Activated CD4-positive, alpha-beta T cell treated with anti-CD3 and anti-CD28 coated beads, Interleukin-2, amount 10 ng/mL, durations not matched to agents 7 days and 5 days (primary cell): ENCODE measurements at regions of chr1 and their contacts with region 1.

Region 1: GRCh38 chr1:37859507-37860345 is at the start of gene MTF1:
- DNase-seq: peak; percentile 98
- H3K4me3 Mint-ChIP-seq: peak within 1 kb of the TSS; percentile 93
- H3K27ac Mint-ChIP-seq: peak within 1 kb of the TSS; percentile 97
- H3K4me1 Mint-ChIP-seq: peaks cover 29% of the 10 kb centered on the region
- H3K27me3 Mint-ChIP-seq: no peaks in the 10 kb centered on the region
- total RNA-seq, gene MTF1: 21.0 to 22.5 TPM

Region 2: GRCh38 chr1:37807555-37808368 is 52.0 kb before region 1 on chr1 and contains the starts of genes C1orf122 and YRDC:
- CTCF ChIA-PET with region 1: interaction called, 16 read pairs
- POLR2A ChIA-PET with region 1: interaction called, 8 read pairs
- DNase-seq: peak; percentile 94
- H3K4me3 Mint-ChIP-seq: peak within 1 kb of the TSS; percentile 95
- H3K27ac Mint-ChIP-seq: peak within 1 kb of the TSS; percentile 96
- H3K4me1 Mint-ChIP-seq: peaks cover 42% of the 10 kb centered on the region
- H3K27me3 Mint-ChIP-seq: no peaks in the 10 kb centered on the region
- total RNA-seq, gene C1orf122: 13.9 to 16.8 TPM
- total RNA-seq, gene YRDC: 12.0 to 13.8 TPM

Region 3: DNA sequence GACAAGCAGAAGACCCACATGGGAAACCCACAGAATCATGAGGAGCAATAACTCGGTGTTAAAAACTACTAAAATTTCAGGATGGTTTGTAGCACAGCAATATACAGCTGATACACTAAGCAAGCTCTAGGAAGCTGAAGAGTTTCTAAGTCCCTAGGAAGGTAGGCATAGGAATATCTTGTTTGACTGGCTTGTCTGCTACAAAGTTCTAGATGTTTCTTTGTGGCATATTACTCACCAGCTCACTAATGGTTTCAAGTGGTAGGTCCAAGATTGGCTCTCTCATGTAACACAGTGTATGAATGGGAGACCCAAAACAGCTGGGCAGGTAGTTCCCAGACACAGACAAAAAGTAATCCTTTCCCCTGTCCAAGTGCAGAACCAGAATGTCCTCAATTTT is 13.0 kb after region 1 on chr1:
- CTCF ChIA-PET with region 1: interaction called, 13 read pairs
- POLR2A ChIA-PET with region 1: no interaction called
- DNase-seq: no peak
- H3K4me3 Mint-ChIP-seq: no peak overlapping the region
- H3K27ac Mint-ChIP-seq: no peak overlapping the region
- H3K4me1 Mint-ChIP-seq: no peaks in the 10 kb centered on the region
- H3K27me3 Mint-ChIP-seq: no peaks in the 10 kb centered on the region